Activated CD4-positive, alpha-beta T cell treated with anti-CD3 and anti-CD28 coated beads for 36 hours (primary cell): ENCODE measurements at regions of chr15 and their contacts with region 1.

Region 1: GRCh38 chr15:60916679-60917460 is 312.2 kb downstream of the RORA start:
- DNase-seq: peak; percentile 94
- ATAC-seq: peak; percentile 94
- H3K4me3 Mint-ChIP-seq: no peak overlapping the region
- H3K27ac Mint-ChIP-seq: peak overlapping the region; percentile 51
- H3K4me1 Mint-ChIP-seq: peaks cover 27% of the 10 kb centered on the region
- H3K27me3 Mint-ChIP-seq: no peaks in the 10 kb centered on the region

Region 2: GRCh38 chr15:60340207-60340921 is 576.5 kb before region 1 on chr15:
- CTCF ChIA-PET with region 1: no interaction called
- POLR2A ChIA-PET with region 1: no interaction called
- intact Hi-C with region 1: no loop called
- DNase-seq: no peak
- ATAC-seq: no peak
- H3K4me3 Mint-ChIP-seq: no peak overlapping the region
- H3K27ac Mint-ChIP-seq: no peak overlapping the region
- H3K4me1 Mint-ChIP-seq: no peaks in the 10 kb centered on the region
- H3K27me3 Mint-ChIP-seq: peaks cover 2% of the 10 kb centered on the region

Region 3: DNA sequence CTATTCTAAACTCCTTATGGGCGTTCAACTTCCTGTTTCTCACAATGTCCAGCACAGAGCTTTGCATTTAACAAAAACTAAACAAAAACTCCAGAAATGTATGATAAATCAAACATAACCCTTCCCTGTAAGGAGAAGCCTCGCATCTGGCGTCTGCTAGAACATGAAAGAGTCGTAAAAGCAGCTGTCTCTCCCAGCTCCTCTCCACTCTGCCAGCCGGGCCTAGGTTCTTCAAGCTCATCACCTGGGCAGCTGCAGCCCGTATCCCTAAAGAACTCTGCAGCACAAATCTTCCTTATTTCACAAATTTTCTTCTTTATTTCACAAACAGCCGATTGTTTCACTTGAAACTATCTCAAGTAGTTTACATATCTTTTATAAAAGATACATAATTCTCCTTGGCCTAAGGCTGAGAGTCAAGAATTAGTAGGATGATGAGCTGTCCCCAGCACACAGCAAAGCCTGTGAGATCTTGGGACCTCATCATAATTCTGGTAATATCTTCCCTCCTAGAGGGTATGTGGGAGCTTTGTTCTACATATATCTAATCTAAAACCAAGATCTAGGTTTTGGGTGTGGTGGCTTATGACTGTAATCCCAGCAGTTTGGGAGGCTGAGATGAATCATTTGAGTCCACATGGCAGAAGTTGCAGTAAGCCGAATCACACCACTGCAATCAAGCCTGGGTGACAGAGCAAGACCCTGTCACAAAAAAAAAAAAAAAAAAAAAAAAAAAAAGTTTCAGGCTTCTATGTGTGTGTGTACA is 554.4 kb before region 1 on chr15:
- CTCF ChIA-PET with region 1: interaction called, 9 read pairs
- POLR2A ChIA-PET with region 1: no interaction called
- intact Hi-C with region 1: loop called in 1 of 2 experiments (anchors 5 kb)
- DNase-seq: peak; percentile 74
- ATAC-seq: peak; percentile 97
- H3K4me3 Mint-ChIP-seq: no peak overlapping the region
- H3K27ac Mint-ChIP-seq: peak overlapping the region; percentile 53
- H3K4me1 Mint-ChIP-seq: peaks cover 18% of the 10 kb centered on the region
- H3K27me3 Mint-ChIP-seq: no peaks in the 10 kb centered on the region

Region 4: DNA sequence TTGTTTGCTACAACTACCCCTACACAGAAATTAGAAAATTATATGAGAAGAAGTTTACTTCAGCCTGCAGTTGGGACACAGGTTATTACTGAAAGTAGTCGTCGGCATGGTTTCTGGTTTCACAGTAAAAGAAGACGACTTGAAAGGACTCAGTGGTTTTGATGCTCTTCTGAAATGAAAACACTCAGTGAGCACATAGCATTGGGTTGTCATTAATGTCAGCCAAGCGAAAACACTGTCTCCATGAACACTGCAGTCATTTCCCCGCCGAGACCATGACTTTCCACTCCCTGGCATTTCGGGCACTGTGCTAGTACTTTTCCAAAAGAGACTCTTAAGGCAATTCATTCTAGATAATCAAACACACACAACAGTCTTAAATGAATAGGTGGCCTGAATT is 368.8 kb before region 1 on chr15:
- CTCF ChIA-PET with region 1: interaction called, 13 read pairs
- POLR2A ChIA-PET with region 1: no interaction called
- intact Hi-C with region 1: no loop called
- DNase-seq: peak; percentile 84
- ATAC-seq: peak; percentile 83
- H3K4me3 Mint-ChIP-seq: peak overlapping the region; percentile 61
- H3K27ac Mint-ChIP-seq: peak overlapping the region; percentile 96
- H3K4me1 Mint-ChIP-seq: peaks cover 97% of the 10 kb centered on the region
- H3K27me3 Mint-ChIP-seq: no peaks in the 10 kb centered on the region

Region 5: DNA sequence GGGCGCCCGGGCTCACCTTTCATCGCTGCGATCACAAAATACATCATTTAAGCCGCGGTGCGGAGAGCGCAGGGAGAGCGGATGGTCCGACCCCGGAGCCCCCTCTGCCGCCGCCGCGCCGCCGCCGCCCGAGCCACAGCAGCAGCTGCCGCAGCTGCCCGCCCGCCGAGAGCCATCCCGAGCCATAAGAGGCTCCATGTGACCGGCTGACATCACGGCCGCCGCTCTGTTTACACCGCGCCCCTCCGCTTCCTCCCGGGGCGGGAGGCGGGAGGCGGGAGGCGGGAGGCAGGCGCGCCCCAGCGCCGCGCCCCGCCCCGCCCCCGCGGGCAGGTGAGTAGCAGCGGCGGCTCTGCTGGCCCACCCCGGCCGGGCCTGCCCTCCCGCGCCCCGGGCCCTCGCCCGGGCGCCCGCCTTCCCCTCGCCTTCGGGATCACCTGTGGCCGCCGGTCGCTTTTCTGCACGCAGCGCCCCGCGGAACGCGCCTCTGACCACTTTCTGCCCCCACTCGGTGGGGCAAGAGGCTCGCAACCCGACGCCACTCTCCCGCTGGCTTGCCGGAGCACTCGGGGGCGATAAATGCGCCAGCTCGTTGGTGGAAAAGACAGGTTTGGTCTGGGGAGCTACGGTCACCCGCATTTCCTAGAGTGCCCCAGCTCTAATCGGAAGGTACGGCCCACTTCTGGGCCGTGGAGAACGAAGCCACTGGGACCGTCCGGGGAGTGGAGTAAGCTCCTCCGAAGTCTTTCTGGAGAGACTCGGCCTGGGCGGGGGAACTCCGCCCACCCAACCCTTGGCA is 324.3 kb before region 1 on chr15:
- CTCF ChIA-PET with region 1: interaction called, 114 read pairs
- POLR2A ChIA-PET with region 1: no interaction called
- intact Hi-C with region 1: no loop called
- DNase-seq: peak; percentile 91
- ATAC-seq: peak; percentile 85
- H3K4me3 Mint-ChIP-seq: peak overlapping the region; percentile 76
- H3K27ac Mint-ChIP-seq: peak overlapping the region; percentile 51
- H3K4me1 Mint-ChIP-seq: peaks cover 47% of the 10 kb centered on the region
- H3K27me3 Mint-ChIP-seq: no peaks in the 10 kb centered on the region

Region 6: GRCh38 chr15:60798821-60799220 is 118.0 kb before region 1 on chr15:
- CTCF ChIA-PET with region 1: interaction called, 4 read pairs
- POLR2A ChIA-PET with region 1: no interaction called
- intact Hi-C with region 1: loop called in 1 of 2 experiments (anchors 5 kb)
- DNase-seq: peak; percentile 81
- ATAC-seq: peak; percentile 80
- H3K4me3 Mint-ChIP-seq: no peak overlapping the region
- H3K27ac Mint-ChIP-seq: peak overlapping the region; percentile 95
- H3K4me1 Mint-ChIP-seq: peaks cover 85% of the 10 kb centered on the region
- H3K27me3 Mint-ChIP-seq: no peaks in the 10 kb centered on the region

Region 7: DNA sequence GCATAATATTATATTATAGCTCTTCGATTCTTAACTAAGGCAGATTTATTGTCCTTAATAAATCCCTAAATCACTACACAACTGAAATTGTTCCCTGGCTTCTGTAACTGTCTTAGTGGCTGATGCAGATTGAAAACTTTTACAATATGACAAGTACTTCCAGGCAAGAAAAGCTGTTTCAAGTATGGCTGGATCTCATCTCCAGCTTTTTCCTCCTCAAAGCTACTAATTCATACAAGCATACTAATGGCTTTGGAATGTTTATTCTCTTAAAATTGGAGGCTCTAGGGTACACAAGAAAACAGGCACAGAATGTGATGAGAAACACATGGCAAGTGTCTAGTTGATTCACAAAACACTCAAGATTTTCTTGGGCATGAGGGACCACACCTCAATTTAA is 86.4 kb before region 1 on chr15:
- CTCF ChIA-PET with region 1: no interaction called
- POLR2A ChIA-PET with region 1: no interaction called
- intact Hi-C with region 1: no loop called
- DNase-seq: no peak
- ATAC-seq: no peak
- H3K4me3 Mint-ChIP-seq: no peak overlapping the region
- H3K27ac Mint-ChIP-seq: no peak overlapping the region
- H3K4me1 Mint-ChIP-seq: peaks cover 7% of the 10 kb centered on the region
- H3K27me3 Mint-ChIP-seq: no peaks in the 10 kb centered on the region

Region 8: DNA sequence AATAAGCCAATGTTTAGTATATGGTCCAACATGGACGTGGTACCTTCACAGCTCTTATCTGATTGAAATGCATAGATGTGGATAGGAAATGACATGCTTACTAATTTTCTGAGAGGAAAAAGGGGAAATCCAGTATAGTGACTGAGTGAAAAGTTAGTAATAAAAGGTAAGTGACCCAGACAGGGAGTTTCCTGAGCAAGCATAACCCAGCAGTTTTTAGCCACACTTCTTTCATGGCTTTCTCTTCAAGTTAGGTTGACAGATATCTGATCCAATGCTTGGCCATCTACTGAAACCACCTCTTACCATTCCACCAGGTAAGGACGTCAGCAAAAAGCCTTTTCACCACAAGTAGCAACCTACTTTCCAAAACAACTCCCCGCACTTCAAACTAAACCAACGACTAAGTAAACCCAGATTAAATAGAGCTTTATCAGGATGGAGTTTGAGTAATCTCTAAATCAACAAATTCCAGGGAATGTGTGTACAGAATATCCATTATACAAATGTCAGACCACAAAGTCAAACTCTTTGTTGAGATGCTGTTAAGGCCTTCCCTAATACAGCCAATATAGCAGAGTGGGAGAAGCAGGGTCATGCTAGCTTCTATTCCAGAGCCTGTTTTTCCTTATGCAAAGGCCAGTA is 17.4 kb before region 1 on chr15:
- CTCF ChIA-PET with region 1: interaction called, 29 read pairs
- POLR2A ChIA-PET with region 1: interaction called, 5 read pairs
- intact Hi-C with region 1: no loop called
- DNase-seq: peak; percentile 42
- ATAC-seq: peak; percentile 85
- H3K4me3 Mint-ChIP-seq: no peak overlapping the region
- H3K27ac Mint-ChIP-seq: peak overlapping the region; percentile 66
- H3K4me1 Mint-ChIP-seq: peaks cover 53% of the 10 kb centered on the region
- H3K27me3 Mint-ChIP-seq: peaks cover 6% of the 10 kb centered on the region

Region 9: DNA sequence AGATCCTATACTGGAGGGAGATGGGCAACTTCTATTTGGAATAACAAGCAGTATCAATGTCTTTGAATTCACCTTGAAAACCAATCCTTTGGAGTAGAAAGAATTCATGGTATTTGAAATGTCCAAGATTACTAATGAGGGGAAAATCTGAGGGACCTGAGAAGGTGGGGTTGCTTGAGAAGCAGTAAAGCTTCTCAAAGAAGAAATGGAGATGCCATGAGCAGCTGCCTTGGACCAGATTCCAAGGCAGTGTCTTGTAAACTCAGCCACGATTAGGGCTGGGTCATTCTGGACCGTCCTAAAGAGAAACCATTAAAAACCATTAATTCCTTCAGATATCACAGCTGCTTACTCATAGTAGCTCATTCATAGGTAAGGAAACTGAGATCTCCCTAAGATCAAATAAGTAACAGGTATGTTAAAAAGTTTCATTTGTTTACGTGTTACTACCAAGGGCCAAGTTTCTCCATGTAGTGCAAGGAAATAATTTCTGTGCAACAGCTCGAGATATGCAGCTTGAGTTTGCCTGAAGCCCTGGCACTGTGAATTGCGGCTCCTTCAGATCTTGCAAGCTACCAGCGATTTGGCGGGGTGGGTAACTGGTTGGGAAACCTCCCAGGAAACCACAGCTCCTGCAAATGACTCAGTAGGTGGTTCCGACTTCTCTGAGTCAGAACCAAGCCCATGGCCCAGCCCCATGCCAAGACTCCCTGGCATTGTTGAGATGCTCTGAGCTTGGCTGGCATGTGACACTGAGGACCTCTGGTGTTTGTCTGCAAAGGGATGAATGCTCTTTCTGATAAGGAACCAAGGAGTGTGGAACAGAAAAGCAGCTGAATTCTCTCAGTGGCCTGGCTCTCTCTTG is 15.4 kb after region 1 on chr15:
- CTCF ChIA-PET with region 1: interaction called, 27 read pairs
- POLR2A ChIA-PET with region 1: interaction called, 3 read pairs
- intact Hi-C with region 1: no loop called
- DNase-seq: peak; percentile 79
- ATAC-seq: peak; percentile 95
- H3K4me3 Mint-ChIP-seq: no peak overlapping the region
- H3K27ac Mint-ChIP-seq: no peak overlapping the region
- H3K4me1 Mint-ChIP-seq: peaks cover 11% of the 10 kb centered on the region
- H3K27me3 Mint-ChIP-seq: peaks cover 6% of the 10 kb centered on the region

Region 10: GRCh38 chr15:61441891-61442290 is 525.0 kb after region 1 on chr15:
- CTCF ChIA-PET with region 1: no interaction called
- POLR2A ChIA-PET with region 1: no interaction called
- intact Hi-C with region 1: no loop called
- DNase-seq: no peak
- ATAC-seq: no peak
- H3K4me3 Mint-ChIP-seq: no peak overlapping the region
- H3K27ac Mint-ChIP-seq: no peak overlapping the region
- H3K4me1 Mint-ChIP-seq: no peaks in the 10 kb centered on the region
- H3K27me3 Mint-ChIP-seq: peaks cover 16% of the 10 kb centered on the region

Region 11: GRCh38 chr15:61621146-61621545 is 704.3 kb after region 1 on chr15:
- CTCF ChIA-PET with region 1: no interaction called
- POLR2A ChIA-PET with region 1: no interaction called
- intact Hi-C with region 1: no loop called
- DNase-seq: peak; percentile 55
- ATAC-seq: no peak
- H3K4me3 Mint-ChIP-seq: no peak overlapping the region
- H3K27ac Mint-ChIP-seq: no peak overlapping the region
- H3K4me1 Mint-ChIP-seq: no peaks in the 10 kb centered on the region
- H3K27me3 Mint-ChIP-seq: peaks cover 3% of the 10 kb centered on the region